Ascending aorta (tissue), 2 donors: ENCODE measurements at regions of chr5 and their contacts with region 1.

Region 1: DNA sequence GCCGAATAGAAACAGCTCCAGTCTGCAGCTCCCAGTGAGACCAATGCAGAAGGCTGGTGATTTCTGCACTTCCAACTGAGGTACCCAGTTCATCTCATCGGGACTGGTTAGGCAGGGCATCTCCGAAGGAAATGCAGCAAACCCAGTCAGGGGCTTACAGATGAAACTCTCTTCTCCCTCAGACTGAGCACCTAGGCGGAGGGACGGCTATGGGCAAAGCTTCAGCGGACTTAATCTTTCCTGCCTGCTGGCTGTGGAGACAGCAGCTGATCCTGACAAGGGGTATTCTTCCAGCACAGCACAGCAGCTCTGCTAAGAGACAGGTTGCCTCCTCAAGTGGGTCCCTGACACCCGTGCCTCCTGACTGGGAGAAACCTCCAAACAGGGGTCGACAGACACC is 330.9 kb downstream of the DNAH5 start:
- DNase-seq: no peak
- H3K4me3 ChIP-seq: no peak overlapping the region
- H3K27ac ChIP-seq: no peak overlapping the region
- H3K4me1 ChIP-seq: no peaks in the 10 kb centered on the region
- H3K27me3 ChIP-seq: no peaks in the 10 kb centered on the region
- CTCF ChIP-seq: no peak

Region 2: GRCh38 chr5:13536921-13537320 is 76.7 kb before region 1 on chr5:
- intact Hi-C with region 1: no loop called
- DNase-seq: no peak
- H3K4me3 ChIP-seq: no peak overlapping the region
- H3K27ac ChIP-seq: no peak overlapping the region
- H3K4me1 ChIP-seq: no peaks in the 10 kb centered on the region
- H3K27me3 ChIP-seq: no peaks in the 10 kb centered on the region
- CTCF ChIP-seq: no peak

Region 3: DNA sequence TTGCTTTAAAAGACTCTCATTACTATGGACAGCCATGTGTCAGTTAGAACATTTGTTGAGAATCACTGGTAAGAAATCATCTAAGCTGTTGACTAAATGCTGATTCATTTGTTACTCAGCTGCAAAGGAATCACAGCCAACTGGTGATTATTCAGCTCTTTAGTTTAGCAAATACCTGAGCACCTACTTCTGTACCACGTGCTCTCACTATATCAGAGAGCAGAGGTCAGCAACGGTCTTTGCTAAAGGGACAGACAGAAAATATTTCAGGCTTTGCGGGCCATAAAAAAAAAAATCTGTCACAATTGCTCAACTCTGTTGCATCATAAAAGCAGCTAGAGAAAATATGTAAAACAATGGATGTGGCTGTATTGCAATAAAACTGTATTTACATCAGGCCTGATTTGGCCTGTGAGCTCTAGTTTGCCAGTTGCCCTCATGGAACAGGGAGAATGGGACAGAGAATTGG is 46.7 kb before region 1 on chr5:
- intact Hi-C with region 1: loop called (anchors 2 kb)
- DNase-seq: no peak
- H3K4me3 ChIP-seq: no peak overlapping the region
- H3K27ac ChIP-seq: no peak overlapping the region
- H3K4me1 ChIP-seq: no peaks in the 10 kb centered on the region
- H3K27me3 ChIP-seq: no peaks in the 10 kb centered on the region
- CTCF ChIP-seq: no peak

Region 4: GRCh38 chr5:14086261-14086660 is 472.6 kb after region 1 on chr5:
- intact Hi-C with region 1: no loop called
- DNase-seq: no peak
- H3K4me3 ChIP-seq: no peak overlapping the region
- H3K27ac ChIP-seq: no peak overlapping the region
- H3K4me1 ChIP-seq: no peaks in the 10 kb centered on the region
- H3K27me3 ChIP-seq: no peaks in the 10 kb centered on the region
- CTCF ChIP-seq: no peak